Activated naive CD4-positive, alpha-beta T cell treated with anti-CD3 and anti-CD28 coated beads for 36 hours (primary cell): ENCODE measurements at regions of chr1 and their contacts with region 1.

Region 1: DNA sequence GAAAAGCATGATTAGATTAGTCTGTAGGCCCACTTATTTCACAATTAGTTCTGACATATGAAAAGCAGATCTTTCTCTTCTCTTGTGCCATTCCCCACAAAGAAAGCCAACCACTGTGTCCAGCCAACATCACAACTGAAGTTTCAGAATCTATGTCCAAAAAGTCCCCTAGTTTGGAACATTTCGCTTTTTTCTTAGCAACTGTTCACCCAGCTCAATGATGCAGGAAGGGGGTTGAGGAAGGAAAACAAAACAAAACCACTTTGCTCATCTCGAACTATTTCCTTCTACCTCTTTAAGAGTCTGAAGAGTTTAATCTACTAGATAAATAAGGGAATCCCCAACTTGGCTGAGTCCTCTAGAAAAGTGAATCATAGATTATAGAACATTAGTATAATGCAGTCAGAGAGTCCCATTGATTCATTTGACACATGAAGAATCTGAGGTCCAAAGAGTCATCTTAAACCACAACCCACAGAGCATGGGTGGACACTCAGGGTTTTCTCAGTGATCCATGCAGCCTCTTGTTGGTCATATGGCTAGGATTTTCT is 159.3 kb upstream of the SGIP1 start:
- DNase-seq: peak; percentile 77
- H3K4me3 Mint-ChIP-seq: peak overlapping the region; percentile 50
- H3K27ac Mint-ChIP-seq: peak overlapping the region; percentile 94
- H3K4me1 Mint-ChIP-seq: peaks cover 76% of the 10 kb centered on the region
- H3K27me3 Mint-ChIP-seq: no peaks in the 10 kb centered on the region

Region 2: DNA sequence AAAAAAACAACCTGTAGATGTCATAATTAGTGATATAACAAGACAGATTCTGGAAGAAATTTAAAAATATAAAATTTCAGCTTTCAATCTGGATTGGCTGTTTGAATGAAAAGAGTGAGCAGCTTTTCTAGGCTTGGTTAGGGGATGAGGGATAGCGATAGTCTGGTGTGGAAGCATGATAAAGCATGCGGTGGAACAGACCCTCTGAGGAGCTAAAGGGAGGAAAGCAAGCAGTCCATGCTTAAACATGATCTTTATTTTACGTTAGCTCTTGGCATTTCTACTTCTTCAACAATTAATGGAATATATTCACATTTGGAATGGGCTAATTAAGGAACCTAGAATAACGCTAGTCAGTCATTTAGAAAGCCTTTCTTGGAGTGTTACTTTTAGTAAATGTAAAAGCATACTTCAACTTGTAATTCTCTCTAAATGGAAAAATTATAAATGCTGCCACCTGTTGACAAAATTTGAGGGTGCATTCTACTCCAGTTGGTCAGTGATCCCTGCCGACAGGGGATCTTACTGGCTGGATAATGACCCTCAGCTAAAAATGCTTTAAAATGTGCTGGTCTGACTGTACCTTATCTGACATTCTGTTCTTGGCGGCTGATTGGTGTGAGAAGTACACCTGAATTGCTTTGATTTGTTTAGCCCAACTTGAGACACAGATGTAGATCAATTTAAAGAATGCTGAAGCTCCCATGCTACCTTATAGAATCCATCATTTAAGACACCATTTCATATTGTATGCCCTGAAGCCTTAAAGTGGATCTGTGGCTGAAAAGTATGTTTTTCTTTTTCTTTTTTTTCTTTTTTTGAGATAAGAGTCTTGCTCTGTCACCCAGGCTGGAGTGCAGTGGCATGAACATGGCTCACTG is 1165.4 kb before region 1 on chr1:
- CTCF ChIA-PET with region 1: no interaction called
- intact Hi-C with region 1: loop called (anchors 5 kb)
- DNase-seq: peak; percentile 28
- H3K4me3 Mint-ChIP-seq: no peak overlapping the region
- H3K27ac Mint-ChIP-seq: no peak overlapping the region
- H3K4me1 Mint-ChIP-seq: peaks cover 23% of the 10 kb centered on the region
- H3K27me3 Mint-ChIP-seq: peaks cover 3% of the 10 kb centered on the region

Region 3: GRCh38 chr1:66271216-66271903 is 103.3 kb before region 1 on chr1:
- CTCF ChIA-PET with region 1: interaction called, 3 read pairs
- intact Hi-C with region 1: loop called (anchors 1 kb)
- DNase-seq: peak; percentile 84
- H3K4me3 Mint-ChIP-seq: peak overlapping the region; percentile 54
- H3K27ac Mint-ChIP-seq: peak overlapping the region; percentile 90
- H3K4me1 Mint-ChIP-seq: peaks cover 74% of the 10 kb centered on the region
- H3K27me3 Mint-ChIP-seq: no peaks in the 10 kb centered on the region

Region 4: DNA sequence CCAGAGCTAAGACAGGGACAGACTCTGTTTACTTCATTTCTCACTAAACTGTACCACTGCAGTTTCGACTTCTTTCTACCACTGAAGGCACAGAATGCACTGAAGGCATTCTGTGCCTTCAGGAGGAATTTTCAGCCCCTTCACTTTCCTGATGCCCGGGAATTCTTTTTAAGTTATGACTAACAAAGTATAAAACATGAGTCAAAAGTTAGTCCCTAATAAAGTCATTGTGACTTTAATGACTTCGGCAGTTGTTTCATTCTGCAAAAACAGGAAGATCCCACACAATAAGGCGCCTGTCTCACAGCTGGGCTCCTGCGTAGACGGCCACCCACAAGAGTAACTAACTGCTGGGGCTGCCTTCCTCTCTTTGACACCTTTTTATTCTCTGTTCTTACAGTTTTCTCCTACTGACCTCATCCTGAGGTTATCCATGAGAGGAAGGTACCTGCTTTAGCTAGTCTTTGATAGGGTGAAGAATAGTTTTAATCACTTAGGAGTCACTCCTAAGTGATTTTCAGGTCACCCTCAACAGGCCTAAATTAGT is 24.6 kb before region 1 on chr1:
- CTCF ChIA-PET with region 1: interaction called, 25 read pairs
- intact Hi-C with region 1: loop called (anchors 1 kb)
- DNase-seq: peak; percentile 80
- H3K4me3 Mint-ChIP-seq: peak overlapping the region; percentile 33
- H3K27ac Mint-ChIP-seq: peak overlapping the region; percentile 90
- H3K4me1 Mint-ChIP-seq: peaks cover 92% of the 10 kb centered on the region
- H3K27me3 Mint-ChIP-seq: no peaks in the 10 kb centered on the region

Region 5: GRCh38 chr1:66676613-66677298 is 302.1 kb after region 1 on chr1:
- CTCF ChIA-PET with region 1: no interaction called
- intact Hi-C with region 1: no loop called
- DNase-seq: no peak
- H3K4me3 Mint-ChIP-seq: no peak overlapping the region
- H3K27ac Mint-ChIP-seq: no peak overlapping the region
- H3K4me1 Mint-ChIP-seq: no peaks in the 10 kb centered on the region
- H3K27me3 Mint-ChIP-seq: no peaks in the 10 kb centered on the region

Region 6: DNA sequence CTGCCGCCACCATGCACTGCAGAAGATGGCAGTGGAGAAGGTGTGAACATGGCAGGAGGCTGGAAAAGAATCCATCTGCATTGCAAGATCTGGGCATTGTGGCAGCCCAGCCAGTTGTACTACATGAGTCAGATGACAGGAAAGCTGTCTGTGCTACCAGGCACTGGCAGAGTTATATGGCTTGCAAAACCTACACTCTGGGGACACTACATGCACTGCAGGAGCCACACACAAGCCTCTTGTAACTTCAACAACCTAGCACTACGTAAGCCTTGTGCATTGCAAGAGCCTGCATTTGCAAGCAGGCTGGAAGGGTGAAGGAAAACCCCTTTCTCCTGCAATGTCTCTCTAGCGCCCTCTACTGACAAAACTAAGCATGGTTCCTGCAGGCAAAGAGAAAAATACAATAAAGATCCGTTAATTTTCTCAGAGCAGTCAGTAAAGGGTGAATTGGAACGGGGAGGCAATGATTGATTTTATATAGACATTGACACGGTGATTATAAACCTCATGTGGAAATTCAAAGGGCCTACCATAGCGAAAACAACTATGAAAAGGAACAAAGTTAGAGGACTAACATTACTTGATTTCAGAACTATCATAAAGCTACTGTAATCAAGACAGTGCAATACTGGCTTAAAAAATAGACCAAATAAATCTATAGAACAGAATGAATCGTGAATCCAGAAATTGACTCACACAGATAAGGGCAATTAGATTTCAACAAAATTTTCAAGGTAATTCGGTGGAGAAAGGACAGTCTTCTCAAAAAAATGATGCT is 351.4 kb after region 1 on chr1:
- CTCF ChIA-PET with region 1: no interaction called
- intact Hi-C with region 1: loop called (anchors 5 kb)
- DNase-seq: peak; percentile 78
- H3K4me3 Mint-ChIP-seq: no peak overlapping the region
- H3K27ac Mint-ChIP-seq: no peak overlapping the region
- H3K4me1 Mint-ChIP-seq: peaks cover 14% of the 10 kb centered on the region
- H3K27me3 Mint-ChIP-seq: peaks cover 4% of the 10 kb centered on the region

Region 7: GRCh38 chr1:67339623-67340343 is 965.1 kb after region 1 on chr1:
- CTCF ChIA-PET with region 1: no interaction called
- intact Hi-C with region 1: loop called (anchors 1 kb)
- DNase-seq: peak; percentile 75
- H3K4me3 Mint-ChIP-seq: peak overlapping the region; percentile 1
- H3K27ac Mint-ChIP-seq: peak overlapping the region; percentile 97
- H3K4me1 Mint-ChIP-seq: peaks cover 83% of the 10 kb centered on the region
- H3K27me3 Mint-ChIP-seq: no peaks in the 10 kb centered on the region